RWPE1 (cell line): ENCODE measurements at regions of chr20 and their contacts with region 1.

Region 1: DNA sequence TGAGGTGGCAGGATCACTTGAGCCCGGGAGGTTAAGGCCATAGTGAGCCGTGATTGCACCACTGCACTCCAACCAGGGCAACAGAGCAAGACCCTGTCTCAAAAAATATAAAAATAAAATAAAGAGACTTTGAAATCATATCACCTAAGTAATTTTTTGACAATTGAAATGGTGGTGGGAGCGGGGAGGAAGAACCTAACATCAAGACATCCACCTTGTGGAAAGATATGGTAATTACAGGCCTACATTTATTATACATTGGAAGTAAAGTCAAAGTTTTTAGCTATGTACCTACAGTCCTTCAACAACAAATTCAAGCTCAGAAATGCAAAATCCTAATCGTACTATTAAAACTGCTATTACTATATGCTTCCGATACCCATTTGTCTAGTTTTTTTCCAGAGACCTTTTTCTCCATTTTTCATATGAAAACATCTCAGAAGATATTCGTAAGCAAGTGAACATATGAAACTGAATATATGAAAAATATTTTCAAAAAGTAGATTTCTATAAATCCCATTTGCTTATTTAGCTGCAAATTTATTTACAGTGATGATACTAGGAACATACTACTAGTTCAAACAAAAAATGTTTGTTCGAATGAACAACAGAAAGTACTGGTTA is 83.3 kb downstream of the SYCP2 start:
- DNase-seq: peak; percentile 71
- H3K27ac ChIP-seq: peak overlapping the region; percentile 29; the same call in 1 of the 2 replicates
- CTCF ChIP-seq: peak; percentile 92

Region 2: GRCh38 chr20:59776626-59777330 is 73.4 kb before region 1 on chr20:
- CTCF ChIA-PET with region 1: interaction called, 69 read pairs
- POLR2A ChIA-PET with region 1: no interaction called
- DNase-seq: no peak
- H3K27ac ChIP-seq: no peak overlapping the region
- CTCF ChIP-seq: no peak

Region 3: GRCh38 chr20:59782986-59783640 is 67.0 kb before region 1 on chr20:
- CTCF ChIA-PET with region 1: interaction called, 69 read pairs
- POLR2A ChIA-PET with region 1: no interaction called
- DNase-seq: peak; percentile 90
- H3K27ac ChIP-seq: no peak overlapping the region
- CTCF ChIP-seq: peak; percentile 99

Region 4: GRCh38 chr20:59788811-59789397 is 61.2 kb before region 1 on chr20:
- CTCF ChIA-PET with region 1: interaction called, 69 read pairs
- POLR2A ChIA-PET with region 1: no interaction called
- DNase-seq: no peak
- H3K27ac ChIP-seq: no peak overlapping the region
- CTCF ChIP-seq: no peak

Region 5: DNA sequence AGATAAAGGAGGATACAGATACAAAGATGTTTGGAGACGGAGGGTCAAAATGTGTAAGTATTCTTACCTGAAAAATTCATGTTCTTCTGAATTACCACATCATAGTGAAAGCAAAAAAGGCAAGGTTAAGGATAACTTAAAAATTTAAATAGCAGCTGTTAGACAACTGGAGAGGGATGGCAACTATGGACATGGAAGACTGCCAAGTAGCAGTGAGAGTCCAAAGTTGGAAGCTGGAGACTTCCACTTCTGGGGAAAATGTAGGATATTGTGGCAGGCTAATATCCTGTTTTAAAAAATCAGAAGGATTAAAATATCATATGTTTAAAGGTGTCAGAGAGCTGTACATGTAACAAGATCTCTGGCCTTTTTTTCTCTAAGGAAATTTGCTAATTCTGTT is 53.5 kb after region 1 on chr20:
- CTCF ChIA-PET with region 1: no interaction called
- POLR2A ChIA-PET with region 1: no interaction called
- DNase-seq: no peak
- H3K27ac ChIP-seq: no peak overlapping the region
- CTCF ChIP-seq: no peak

Region 6: GRCh38 chr20:60292001-60292520 is 441.9 kb after region 1 on chr20:
- CTCF ChIA-PET with region 1: no interaction called
- POLR2A ChIA-PET with region 1: no interaction called
- DNase-seq: no peak
- H3K27ac ChIP-seq: no peak overlapping the region
- CTCF ChIP-seq: no peak